ENCODE measurements at regions of chr6 and their contacts with region 1.

Region 1: DNA sequence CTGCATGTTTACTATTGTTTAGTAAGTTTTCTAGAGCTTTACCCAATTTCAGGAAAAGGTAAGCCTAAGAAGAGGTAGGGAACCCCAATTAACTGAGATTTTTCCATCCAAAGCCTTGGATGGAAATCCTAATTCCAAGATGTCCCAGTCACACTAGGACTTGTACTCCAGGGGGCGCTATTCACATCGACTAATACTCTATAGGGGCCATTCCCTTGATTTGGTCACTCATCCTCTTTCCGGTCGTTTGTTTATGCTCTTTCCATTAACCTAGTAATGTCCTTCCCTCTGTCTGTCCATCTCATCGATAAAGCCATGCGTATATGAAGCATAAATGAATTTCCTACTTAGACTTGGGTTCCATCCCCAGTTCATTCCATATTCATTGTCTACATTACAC is 80.8 kb upstream of the FUCA2 start:
- DNase-seq: no peak
- ATAC-seq: no peak
- H3K4me3 ChIP-seq: no peak overlapping the region
- H3K27ac ChIP-seq: no peak overlapping the region
- H3K4me1 ChIP-seq: peaks cover 6 to 31% (median 27%) of the 10 kb centered on the region in 9 donors
- H3K27me3 ChIP-seq: no peaks in the 10 kb centered on the region
- CTCF ChIP-seq: peak in 6 of 9 donors; percentile 17 to 39 (median 28)

Region 2: DNA sequence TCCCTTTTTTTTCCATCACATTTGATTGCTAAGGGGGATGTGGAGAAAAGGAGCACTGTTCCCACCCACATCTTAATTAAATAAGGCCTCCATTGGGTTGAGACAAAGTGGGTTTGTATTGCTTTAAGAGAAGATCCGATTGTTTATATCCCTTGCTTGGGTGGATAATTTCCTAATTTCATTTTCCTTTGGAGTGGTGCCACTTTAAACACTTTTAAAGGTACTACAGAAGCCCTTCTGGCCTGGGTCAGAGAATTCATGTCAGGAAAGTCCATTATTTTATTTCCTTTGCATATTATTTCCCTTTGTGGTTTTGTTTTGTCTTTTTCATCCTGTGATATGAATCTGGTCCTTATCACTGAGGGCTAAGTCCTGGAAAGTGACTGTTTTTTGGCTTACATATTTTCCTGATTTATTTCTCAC is 142.3 kb after region 1 on chr6:
- intact Hi-C with region 1: loop called in 1 of 10 experiments (anchors 10 kb)
- DNase-seq: no peak
- ATAC-seq: peak in 7 of 8 donors; percentile 37 to 86 (median 68)
- H3K4me3 ChIP-seq: peak overlapping the region in 1 of 10 donors; percentile 14
- H3K27ac ChIP-seq: peak overlapping the region in 6 of 10 donors; percentile 2 to 65 (median 26)
- H3K4me1 ChIP-seq: peaks cover 0 to 81% (median 41%) of the 10 kb centered on the region in 9 donors
- H3K27me3 ChIP-seq: no peaks in the 10 kb centered on the region
- CTCF ChIP-seq: no peak

Measured in heart right ventricle (tissue), 16 donors.